Panc1 (cell line): ENCODE measurements at regions of chr3 and their contacts with region 1.

Region 1: DNA sequence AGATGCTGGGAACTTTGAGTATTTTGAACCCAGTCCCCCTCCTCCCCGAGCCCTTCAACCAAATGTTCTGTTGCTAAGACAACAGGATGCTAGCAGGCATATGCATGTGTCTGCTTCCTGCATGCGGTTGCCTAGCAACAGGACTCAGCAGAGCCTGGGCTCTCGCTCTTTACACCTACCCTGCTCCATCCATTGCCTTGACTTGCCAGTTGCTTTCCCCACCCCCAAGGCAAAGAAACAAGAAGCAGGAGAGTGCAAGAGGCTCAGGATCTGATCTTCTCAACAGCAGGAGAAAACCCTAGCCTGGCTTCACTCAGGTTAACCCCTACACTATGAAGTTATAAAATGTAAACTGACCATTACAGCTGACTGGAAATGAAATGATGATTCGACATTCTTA is 393.0 kb downstream of the IGSF11 start:
- DNase-seq: no peak
- ATAC-seq: no peak
- H3K4me3 ChIP-seq: no peak overlapping the region
- H3K27ac ChIP-seq: no peak overlapping the region
- H3K4me1 ChIP-seq: no peaks in the 10 kb centered on the region
- H3K27me3 ChIP-seq: no peaks in the 10 kb centered on the region
- CTCF ChIP-seq: no peak

Region 2: GRCh38 chr3:118817748-118818165 is 176.1 kb after region 1 on chr3:
- CTCF ChIA-PET with region 1: no interaction called
- POLR2A ChIA-PET with region 1: no interaction called
- in situ Hi-C with region 1: no loop called
- intact Hi-C with region 1: loop called (anchors 10 kb)
- DNase-seq: no peak
- ATAC-seq: peak; percentile 88
- H3K4me3 ChIP-seq: no peak overlapping the region
- H3K27ac ChIP-seq: no peak overlapping the region
- H3K4me1 ChIP-seq: no peaks in the 10 kb centered on the region
- H3K27me3 ChIP-seq: 0 out of 2 replicates have a peak, but pooled peaks cover 3% of the 10 kb centered on the region
- CTCF ChIP-seq: peak; percentile 84

Region 3: GRCh38 chr3:118938183-118938961 is 296.8 kb after region 1 on chr3:
- CTCF ChIA-PET with region 1: no interaction called
- POLR2A ChIA-PET with region 1: no interaction called
- in situ Hi-C with region 1: no loop called
- intact Hi-C with region 1: no loop called
- DNase-seq: no peak
- ATAC-seq: no peak
- H3K4me3 ChIP-seq: no peak overlapping the region
- H3K27ac ChIP-seq: no peak overlapping the region
- H3K4me1 ChIP-seq: no peaks in the 10 kb centered on the region
- H3K27me3 ChIP-seq: no peaks in the 10 kb centered on the region
- CTCF ChIP-seq: no peak